GM10248 (cell line): ENCODE measurements at regions of chr7 and their contacts with region 1.

Region 1: DNA sequence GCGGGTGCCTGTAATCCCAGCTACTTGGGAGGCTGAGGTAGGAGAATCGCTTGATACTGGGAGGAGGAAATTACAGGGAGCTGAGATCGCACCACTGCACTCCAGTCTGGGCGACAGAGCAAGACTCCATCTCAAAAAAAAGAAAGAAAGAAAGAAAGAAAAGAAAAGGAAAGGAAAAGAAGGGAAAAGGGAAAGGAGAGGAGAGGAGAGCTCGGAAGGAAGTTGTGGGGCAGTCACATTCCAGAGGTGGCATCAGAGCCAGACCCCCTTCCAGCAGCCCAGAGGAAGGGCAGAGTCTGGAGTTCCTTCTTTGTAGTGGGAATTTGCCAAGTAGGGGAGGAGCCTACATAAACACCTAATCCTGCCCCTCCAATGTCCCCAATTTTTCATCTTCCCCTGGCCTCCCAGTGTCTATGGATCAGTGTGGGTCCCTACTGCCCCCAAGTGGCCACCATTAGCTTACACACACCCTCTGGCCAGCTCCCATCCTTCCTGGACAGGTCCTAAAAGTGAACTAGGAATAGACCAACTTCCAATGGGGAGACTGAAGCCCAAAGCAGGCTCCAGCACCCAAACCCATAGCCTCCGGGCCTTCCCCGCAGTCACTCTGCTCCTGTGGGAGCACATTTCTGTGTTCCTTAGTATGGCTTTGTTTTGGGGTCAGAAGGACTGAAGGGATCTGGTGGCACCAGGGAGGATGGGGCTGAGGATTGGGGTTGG is 39.6 kb upstream of the HSPB1 start:
- DNase-seq: peak; percentile 61
- CTCF ChIP-seq: peak; percentile 80

Region 2: GRCh38 chr7:76185187-76185896 is 77.5 kb before region 1 on chr7:
- CTCF ChIA-PET with region 1: interaction called, 11 read pairs
- POLR2A ChIA-PET with region 1: interaction called, 5 read pairs
- DNase-seq: no peak
- CTCF ChIP-seq: no peak

Region 3: DNA sequence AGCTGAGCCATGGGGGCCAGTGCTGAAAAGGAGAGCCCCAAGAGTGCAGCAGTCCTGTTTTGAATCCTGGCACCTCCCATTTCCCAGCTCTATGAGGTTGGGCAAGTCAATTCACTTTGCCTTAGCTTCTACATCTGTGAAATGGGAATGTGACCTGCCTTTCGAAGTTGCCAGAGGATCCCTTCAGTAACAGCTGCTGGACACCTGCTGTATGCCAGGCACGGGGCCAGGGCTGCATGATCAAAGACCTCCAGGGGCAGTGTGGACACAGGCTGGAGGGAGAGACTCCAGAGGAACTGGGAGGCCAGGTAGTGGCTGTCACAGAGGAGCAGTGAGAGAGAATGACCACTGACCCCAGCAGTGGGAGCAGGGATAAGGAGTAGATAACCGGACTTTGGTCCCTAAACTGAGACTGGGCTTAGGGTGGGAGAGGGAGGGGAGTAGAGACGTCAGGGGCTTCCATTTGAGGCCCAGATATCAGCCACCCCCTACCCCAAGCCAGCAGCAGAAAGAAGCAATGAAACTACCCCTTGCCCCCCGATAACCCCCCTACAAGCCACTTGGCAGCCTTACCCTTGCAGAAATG is 15.9 kb before region 1 on chr7:
- CTCF ChIA-PET with region 1: interaction called, 24 read pairs
- POLR2A ChIA-PET with region 1: interaction called, 6 read pairs
- DNase-seq: no peak
- CTCF ChIP-seq: no peak

Region 4: GRCh38 chr7:76282344-76283253 is 19.8 kb after region 1 on chr7:
- CTCF ChIA-PET with region 1: interaction called, 14 read pairs
- POLR2A ChIA-PET with region 1: no interaction called
- DNase-seq: no peak
- CTCF ChIP-seq: no peak

Region 5: DNA sequence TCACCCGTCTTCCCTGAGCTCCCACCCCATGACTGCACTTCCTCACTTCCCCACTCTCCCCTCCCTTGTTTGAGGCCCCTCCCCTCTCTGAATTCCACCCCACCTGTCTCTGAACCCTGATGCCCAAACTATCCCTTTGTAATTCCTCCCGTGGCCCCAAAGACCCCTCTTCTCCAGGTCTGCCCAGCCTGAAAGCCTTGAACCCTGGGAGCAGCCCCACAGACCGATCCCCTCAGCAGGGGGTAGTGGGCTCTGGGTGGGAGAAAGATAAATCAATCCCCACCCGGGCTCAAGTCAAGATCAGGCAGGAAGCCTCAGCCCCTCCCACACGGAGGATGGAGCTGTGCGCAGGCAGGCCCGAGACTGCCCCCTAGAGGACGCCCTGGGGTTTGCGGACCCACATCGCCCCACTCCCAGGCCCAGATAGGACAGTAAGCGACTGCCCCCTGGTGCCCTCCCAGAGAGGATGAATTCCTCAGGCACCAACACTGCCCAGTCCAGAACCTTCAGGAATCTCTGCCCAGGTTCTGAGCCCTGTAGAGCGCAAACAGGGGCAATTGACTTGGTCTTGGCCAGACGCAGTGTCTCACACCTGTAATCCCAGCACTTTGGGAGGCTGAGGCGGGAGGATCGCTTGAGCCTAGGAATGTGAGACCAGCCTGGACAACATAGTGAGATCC is 51.3 kb after region 1 on chr7:
- CTCF ChIA-PET with region 1: interaction called, 28 read pairs
- POLR2A ChIA-PET with region 1: no interaction called
- DNase-seq: peak; percentile 92
- CTCF ChIP-seq: peak; percentile 100

Region 6: GRCh38 chr7:76346778-76347177 is 83.9 kb after region 1 on chr7:
- CTCF ChIA-PET with region 1: no interaction called
- POLR2A ChIA-PET with region 1: no interaction called
- DNase-seq: no peak
- CTCF ChIP-seq: no peak